ENCODE measurements at regions of chr1 and their contacts with region 1.

Region 1: DNA sequence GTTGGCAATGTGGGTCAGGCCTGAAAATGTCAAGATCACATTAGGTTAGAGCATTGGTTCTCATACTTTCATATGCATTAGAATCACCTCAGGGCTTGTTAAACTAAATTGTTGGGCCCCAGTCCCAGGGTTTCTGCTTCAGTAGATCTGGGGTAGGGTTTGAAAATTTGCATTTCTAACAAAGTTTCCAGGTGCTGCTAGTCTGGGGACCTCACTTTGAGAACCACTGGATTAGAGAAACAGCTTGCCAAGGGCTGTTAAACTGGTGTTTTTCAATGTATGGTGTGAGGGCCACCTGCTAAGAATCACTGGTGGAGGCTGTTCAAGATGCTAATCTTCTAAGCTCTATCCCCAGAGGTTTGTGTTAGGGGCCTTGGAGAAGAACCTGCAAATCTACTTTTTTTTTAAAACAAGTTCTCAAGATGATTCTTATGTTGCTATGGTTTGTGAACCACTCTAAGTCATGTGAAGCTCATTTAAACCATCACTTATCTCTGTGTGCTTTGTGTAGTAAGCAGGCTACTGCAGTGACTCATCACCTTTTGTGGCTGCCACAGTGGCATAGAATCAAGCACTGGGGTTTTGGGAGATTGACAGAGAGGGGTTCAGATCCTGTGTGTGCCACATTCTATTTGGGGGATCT is 152.2 kb downstream of the S1PR1 start:
- DNase-seq: peak; percentile 23
- CTCF ChIP-seq: no peak

Region 2: DNA sequence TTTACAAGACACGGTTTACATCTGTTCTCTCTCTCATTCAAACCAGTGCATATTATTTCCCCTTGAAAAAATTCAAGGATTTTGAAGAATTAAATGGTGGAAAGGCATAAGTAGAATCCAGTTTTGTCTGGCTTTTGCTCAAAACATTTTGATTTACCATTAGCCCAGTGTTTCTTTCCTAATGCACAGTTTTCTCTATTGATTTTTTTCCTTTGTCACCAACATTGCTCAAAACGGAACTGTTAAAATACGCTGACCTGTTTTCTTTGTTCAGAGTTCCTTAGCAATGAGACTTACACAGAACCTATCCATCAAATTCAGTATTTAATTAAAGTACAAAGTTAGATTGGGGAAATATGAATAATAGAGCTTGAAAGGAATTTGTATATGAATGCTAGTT is 10.2 kb after region 1 on chr1:
- CTCF ChIA-PET with region 1: interaction called, 121 read pairs
- POLR2A ChIA-PET with region 1: no interaction called
- DNase-seq: no peak
- CTCF ChIP-seq: no peak

Measured in GM10248 (cell line).